Activated T-helper 2 cell treated with anti-CD3 and anti-CD28 coated beads, Interferon-gamma antibody, Interleukin-2, Interleukin-4, amounts not matched to agents 10 μg/mL and 5 μg/mL and 100 μg/mL, durations not matched to agents 14 hours and 24 hours and 36 hours (primary cell): ENCODE measurements at regions of chr5 and their contacts with region 1.

Region 1: GRCh38 chr5:172188033-172188892 is at the start of gene STK10:
- DNase-seq: peak; percentile 88
- H3K4me3 Mint-ChIP-seq: peak within 1 kb of the TSS; percentile 93
- H3K27ac Mint-ChIP-seq: peak within 1 kb of the TSS; percentile 94
- H3K4me1 Mint-ChIP-seq: peaks cover 25% of the 10 kb centered on the region
- H3K27me3 Mint-ChIP-seq: peaks cover 12% of the 10 kb centered on the region
- total RNA-seq, gene STK10: 102 and 105 TPM in 2 replicates

Region 2: GRCh38 chr5:172006321-172007174 is 181.7 kb before region 1 on chr5 and contains the start of gene FBXW11:
- intact Hi-C with region 1: loop called (anchors 1 kb)
- DNase-seq: peak; percentile 92
- H3K4me3 Mint-ChIP-seq: peak within 1 kb of the TSS; percentile 94
- H3K27ac Mint-ChIP-seq: peak within 1 kb of the TSS; percentile 96
- H3K4me1 Mint-ChIP-seq: peaks cover 56% of the 10 kb centered on the region
- H3K27me3 Mint-ChIP-seq: no peaks in the 10 kb centered on the region
- total RNA-seq, gene FBXW11: 47.3 and 51.4 TPM in 2 replicates

Region 3: GRCh38 chr5:172150514-172151425 is 37.5 kb before region 1 on chr5:
- intact Hi-C with region 1: loop called (anchors 2 kb)
- DNase-seq: no peak
- H3K4me3 Mint-ChIP-seq: peak overlapping the region; percentile 55
- H3K27ac Mint-ChIP-seq: peak overlapping the region; percentile 85
- H3K4me1 Mint-ChIP-seq: peaks cover 43% of the 10 kb centered on the region
- H3K27me3 Mint-ChIP-seq: no peaks in the 10 kb centered on the region

Region 4: DNA sequence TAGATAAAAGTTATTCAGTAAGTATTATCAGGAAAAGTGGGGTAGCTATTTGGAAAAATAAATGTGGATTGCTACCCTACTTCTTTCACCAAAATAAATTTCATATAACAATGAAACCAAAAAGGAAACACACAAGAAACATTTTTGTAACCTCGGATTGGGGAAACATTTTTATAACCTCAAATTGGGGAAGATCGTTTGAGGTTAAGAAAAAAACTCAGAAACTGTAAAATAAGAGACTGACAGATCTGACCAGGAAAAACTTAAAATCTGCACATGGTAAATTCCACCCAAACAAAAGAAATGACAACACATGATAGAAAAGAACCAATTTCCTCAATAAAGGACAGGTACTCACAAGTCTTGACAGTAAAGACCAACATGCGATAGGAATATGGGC is 19.2 kb after region 1 on chr5:
- intact Hi-C with region 1: no loop called
- DNase-seq: no peak
- H3K4me3 Mint-ChIP-seq: no peak overlapping the region
- H3K27ac Mint-ChIP-seq: no peak overlapping the region
- H3K4me1 Mint-ChIP-seq: peaks cover 12% of the 10 kb centered on the region
- H3K27me3 Mint-ChIP-seq: no peaks in the 10 kb centered on the region

Region 5: GRCh38 chr5:172223901-172224873 is 35.9 kb after region 1 on chr5:
- intact Hi-C with region 1: loop called (anchors 2 kb)
- DNase-seq: peak; percentile 11
- H3K4me3 Mint-ChIP-seq: no peak overlapping the region
- H3K27ac Mint-ChIP-seq: peak overlapping the region; percentile 71
- H3K4me1 Mint-ChIP-seq: peaks cover 31% of the 10 kb centered on the region
- H3K27me3 Mint-ChIP-seq: peaks cover 24% of the 10 kb centered on the region

Region 6: GRCh38 chr5:172322028-172322965 is 134.0 kb after region 1 on chr5:
- intact Hi-C with region 1: no loop called
- DNase-seq: no peak
- H3K4me3 Mint-ChIP-seq: no peak overlapping the region
- H3K27ac Mint-ChIP-seq: no peak overlapping the region
- H3K4me1 Mint-ChIP-seq: no peaks in the 10 kb centered on the region
- H3K27me3 Mint-ChIP-seq: peaks cover 2% of the 10 kb centered on the region